Posterior vena cava (tissue), 2 donors: ENCODE measurements at regions of chr6 and their contacts with region 1.

Region 1: GRCh38 chr6:112477125-112477524 is 130.0 kb downstream of the RFPL4B start:
- DNase-seq: no peak

Region 2: DNA sequence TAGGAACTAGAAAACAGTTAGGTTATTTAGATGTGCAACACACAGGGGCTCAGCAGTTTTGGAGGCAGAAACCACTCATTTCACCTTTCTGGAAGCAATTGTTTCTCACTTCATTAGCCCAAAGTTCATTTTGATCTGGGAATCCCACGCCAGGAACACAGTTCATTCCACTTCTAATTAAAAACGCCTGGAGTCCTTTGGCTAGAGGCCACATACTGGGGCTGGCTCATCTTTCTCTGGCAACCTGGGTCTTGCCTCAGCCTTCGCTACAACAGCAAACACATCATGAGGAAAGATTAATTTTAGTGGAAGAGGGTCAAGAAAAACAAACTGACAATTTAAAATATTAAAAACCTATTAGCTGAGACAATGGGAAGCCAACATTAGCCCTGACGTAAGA is 60.3 kb before region 1 on chr6:
- intact Hi-C with region 1: loop called in 1 of 2 experiments (anchors 2 kb)
- DNase-seq: no peak